Gastrocnemius medialis (tissue), 4 donors: ENCODE measurements at regions of chr12 and their contacts with region 1.

Region 1: DNA sequence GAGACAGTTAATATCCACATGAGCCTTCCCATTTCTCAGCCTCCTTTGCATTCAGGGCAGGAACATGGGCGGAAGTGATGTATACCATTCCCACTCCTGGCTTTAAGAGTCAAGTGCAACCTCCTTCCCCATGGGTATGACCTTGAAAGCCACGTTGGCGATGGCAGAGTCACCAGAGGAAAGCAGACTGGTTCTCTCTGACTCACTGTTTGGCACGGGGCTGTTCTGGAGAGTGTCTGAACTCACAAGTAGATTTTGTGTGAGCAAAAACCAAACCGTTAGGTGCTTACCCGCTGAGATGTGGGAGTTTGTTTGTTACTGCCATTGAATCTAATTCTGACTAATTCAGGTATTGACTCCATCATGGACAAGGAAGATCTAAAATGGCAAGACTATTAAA is 36.7 kb upstream of the PZP start:
- DNase-seq: no peak
- ATAC-seq: no peak
- H3K4me3 ChIP-seq: no peak overlapping the region
- H3K27ac ChIP-seq: no peak overlapping the region
- H3K4me1 ChIP-seq: no peaks in the 10 kb centered on the region
- H3K27me3 ChIP-seq: no peaks in the 10 kb centered on the region
- CTCF ChIP-seq: no peak
- POLR2A ChIP-seq: no peak

Region 2: DNA sequence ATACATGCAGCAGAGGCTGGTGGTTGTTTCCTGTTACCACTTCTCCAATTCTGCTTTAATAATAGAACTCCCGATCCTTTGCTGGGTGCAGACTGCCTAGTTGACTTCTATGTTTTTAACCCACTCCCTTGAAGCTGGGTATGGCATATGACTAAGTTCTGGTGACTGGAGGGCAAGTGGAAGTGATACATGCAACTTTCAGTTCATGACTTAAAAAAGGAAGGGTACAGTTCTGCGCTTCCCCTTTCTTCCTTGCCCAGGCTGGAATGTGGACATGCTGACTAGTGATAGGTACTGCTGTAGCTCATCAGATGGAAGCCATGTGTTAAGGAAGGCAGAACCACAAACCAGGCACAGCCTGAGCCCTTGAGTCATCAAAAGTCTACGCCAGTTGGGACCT is 126.7 kb before region 1 on chr12:
- in situ Hi-C with region 1: no loop called
- intact Hi-C with region 1: loop called (anchors 10 kb)
- DNase-seq: peak; percentile 18 to 31
- ATAC-seq: peak in 1 of 2 donors; percentile 28
- H3K4me3 ChIP-seq: no peak overlapping the region
- H3K27ac ChIP-seq: peak overlapping the region; percentile 64 to 69 (median 66)
- H3K4me1 ChIP-seq: peaks cover 26 to 42% of the 10 kb centered on the region in 2 donors
- H3K27me3 ChIP-seq: no peaks in the 10 kb centered on the region
- CTCF ChIP-seq: no peak
- POLR2A ChIP-seq: no peak

Region 3: DNA sequence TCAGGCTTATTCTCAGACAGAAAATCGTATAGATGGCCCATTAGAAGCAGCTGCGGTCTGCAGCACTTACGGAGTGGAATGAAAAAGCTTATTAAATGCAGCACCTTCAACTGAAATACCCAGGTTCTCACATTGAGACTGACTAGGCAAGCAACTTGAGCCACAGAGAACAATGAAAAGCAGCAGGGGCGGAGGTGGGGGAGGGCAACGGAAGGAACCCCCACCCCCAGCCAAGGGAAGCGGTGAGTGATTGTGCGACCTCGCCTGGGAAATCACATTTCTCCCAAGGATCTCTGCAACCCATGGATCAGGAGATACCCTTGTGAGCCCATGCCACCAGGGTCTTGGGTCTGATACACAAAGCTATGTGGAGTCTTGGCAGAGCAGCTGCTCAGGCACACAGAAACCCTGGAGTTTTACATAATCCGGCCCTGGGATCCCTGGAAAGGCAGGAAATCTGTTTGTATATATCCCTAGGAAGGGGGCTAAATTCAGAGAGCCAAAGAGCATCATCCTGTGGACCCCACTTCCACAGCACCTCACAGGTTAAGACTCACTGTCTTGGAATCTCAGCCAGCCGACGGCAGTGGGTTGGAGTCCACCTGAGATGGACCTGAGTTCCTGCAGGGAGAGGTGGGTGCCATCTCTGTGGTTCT is 74.8 kb before region 1 on chr12:
- in situ Hi-C with region 1: no loop called
- intact Hi-C with region 1: loop called (anchors 5 kb)
- DNase-seq: no peak
- ATAC-seq: peak in 1 of 2 donors; percentile 45
- H3K4me3 ChIP-seq: no peak overlapping the region
- H3K27ac ChIP-seq: peak overlapping the region in 3 of 4 donors; percentile 11 to 48 (median 45)
- H3K4me1 ChIP-seq: peaks cover 0 to 4% of the 10 kb centered on the region in 2 donors
- H3K27me3 ChIP-seq: no peaks in the 10 kb centered on the region
- CTCF ChIP-seq: no peak
- POLR2A ChIP-seq: no peak

Region 4: GRCh38 chr12:9464408-9464807 is 219.5 kb after region 1 on chr12:
- in situ Hi-C with region 1: no loop called
- intact Hi-C with region 1: no loop called
- DNase-seq: no peak
- ATAC-seq: no peak
- H3K4me3 ChIP-seq: no peak overlapping the region
- H3K27ac ChIP-seq: no peak overlapping the region
- H3K4me1 ChIP-seq: no peaks in the 10 kb centered on the region
- H3K27me3 ChIP-seq: no peaks in the 10 kb centered on the region
- CTCF ChIP-seq: no peak
- POLR2A ChIP-seq: no peak